ENCODE measurements at regions of chr1 and their contacts with region 1.

Region 1: DNA sequence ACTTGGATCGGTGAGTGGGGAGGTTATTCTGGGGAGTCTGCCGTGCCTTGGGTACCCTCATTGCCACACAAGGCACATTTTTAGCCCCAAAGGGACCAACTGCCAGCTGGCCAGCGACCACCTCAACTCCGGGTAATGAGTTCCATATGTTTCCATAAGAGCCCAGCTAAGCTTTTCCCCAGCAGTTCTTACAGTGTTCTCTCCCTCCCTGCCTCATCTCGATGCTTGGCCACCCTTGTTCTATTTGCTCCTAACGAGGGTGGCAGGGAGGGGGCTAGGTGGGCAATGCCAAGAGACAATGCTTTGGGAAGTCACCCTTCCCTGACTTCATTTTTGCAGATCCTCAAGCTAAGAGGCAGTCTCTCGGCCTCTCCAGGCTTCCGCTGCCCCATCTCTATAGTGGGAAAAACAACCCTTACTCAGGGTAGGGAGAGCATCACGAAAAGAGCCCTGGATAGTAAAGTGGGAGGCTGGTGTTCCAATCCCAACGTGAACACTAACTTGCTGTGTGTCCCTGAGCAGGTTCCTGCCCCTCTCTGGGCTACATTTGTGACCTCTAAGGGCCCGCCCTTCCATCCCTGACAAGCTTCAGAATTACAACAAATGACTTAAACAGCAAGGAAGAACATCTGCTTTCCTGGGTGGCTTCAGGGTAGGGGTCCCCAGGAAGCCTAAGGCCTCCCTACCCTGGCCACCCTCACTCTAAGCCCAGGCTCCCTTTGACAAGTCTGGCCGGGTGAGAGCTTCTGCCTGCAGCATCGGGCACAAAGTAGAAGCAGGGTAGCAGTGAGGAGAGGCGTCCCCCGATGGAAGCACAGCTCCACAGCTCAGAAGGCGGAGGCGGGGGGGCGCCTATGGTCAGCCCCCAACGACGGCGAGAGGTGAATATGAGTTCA is 5.8 kb downstream of the ID3 start:
- DNase-seq: no peak
- H3K4me3 ChIP-seq: peak overlapping the region in 1 of 3 donors; percentile 68
- H3K27ac ChIP-seq: peak overlapping the region; percentile 93 to 94
- H3K4me1 ChIP-seq: no peaks in the 10 kb centered on the region
- H3K27me3 ChIP-seq: no peaks in the 10 kb centered on the region
- CTCF ChIP-seq: no peak
- POLR2A ChIP-seq: no peak

Region 2: GRCh38 chr1:23403735-23404486 is 149.6 kb before region 1 on chr1:
- intact Hi-C with region 1: no loop called
- DNase-seq: peak; percentile 90 to 92
- H3K4me3 ChIP-seq: peak overlapping the region in 2 of 3 donors; percentile 9 to 41
- H3K27ac ChIP-seq: peak overlapping the region; percentile 63 to 65
- H3K4me1 ChIP-seq: peaks cover 0 to 22% of the 10 kb centered on the region in 2 donors
- H3K27me3 ChIP-seq: no peaks in the 10 kb centered on the region
- CTCF ChIP-seq: peak; percentile 93 to 96 (median 94)
- POLR2A ChIP-seq: no peak

Region 3: DNA sequence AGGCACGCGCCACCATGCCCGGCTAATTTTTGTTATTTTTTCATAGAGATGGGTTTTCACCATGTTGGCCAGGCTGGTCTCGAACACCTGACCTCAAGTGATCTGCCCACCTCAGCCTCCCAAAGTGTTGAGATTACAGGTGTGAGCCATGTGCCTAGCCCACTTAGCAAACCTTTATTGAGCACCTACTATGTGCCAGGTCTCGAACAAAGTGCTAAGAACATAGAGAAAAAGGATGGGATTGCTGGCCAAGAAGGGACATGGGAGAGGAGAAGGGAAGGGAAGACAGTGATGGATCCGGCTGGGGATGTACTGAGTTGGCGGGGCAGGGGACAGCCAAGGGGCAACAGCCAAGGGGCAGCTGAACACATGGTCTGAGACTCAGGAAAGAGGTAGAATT is 82.5 kb after region 1 on chr1:
- intact Hi-C with region 1: loop called (anchors 2 kb)
- DNase-seq: no peak
- H3K4me3 ChIP-seq: no peak overlapping the region
- H3K27ac ChIP-seq: no peak overlapping the region
- H3K4me1 ChIP-seq: no peaks in the 10 kb centered on the region
- H3K27me3 ChIP-seq: no peaks in the 10 kb centered on the region
- CTCF ChIP-seq: no peak
- POLR2A ChIP-seq: no peak

Region 4: GRCh38 chr1:23825076-23825761 is 271.7 kb after region 1 on chr1 and contains the start of gene HMGCL:
- intact Hi-C with region 1: no loop called
- DNase-seq: peak; percentile 89 to 94
- H3K4me3 ChIP-seq: peak within 1 kb of the TSS; percentile 88 to 98 (median 97)
- H3K27ac ChIP-seq: peak within 1 kb of the TSS; percentile 97
- H3K4me1 ChIP-seq: no peaks in the 10 kb centered on the region
- H3K27me3 ChIP-seq: no peaks in the 10 kb centered on the region
- CTCF ChIP-seq: no peak
- POLR2A ChIP-seq: peak; percentile 86
- total RNA-seq, gene HMGCL: 31.7 to 42.4 (median 39.0) TPM